ENCODE measurements at regions of chr7 and their contacts with region 1.

Region 1: GRCh38 chr7:18547509-18548187 is 52.1 kb downstream of the HDAC9 start:
- DNase-seq: no peak
- ATAC-seq: no peak
- H3K4me3 ChIP-seq: no peak overlapping the region
- H3K27ac ChIP-seq: peak overlapping the region; percentile 84
- H3K4me1 ChIP-seq: peaks cover 46% of the 10 kb centered on the region
- H3K27me3 ChIP-seq: no peaks in the 10 kb centered on the region
- CTCF ChIP-seq: no peak

Region 2: GRCh38 chr7:18408461-18408860 is 139.2 kb before region 1 on chr7:
- CTCF ChIA-PET with region 1: no interaction called
- POLR2A ChIA-PET with region 1: interaction called, 4 read pairs
- intact Hi-C with region 1: loop called (anchors 1 kb)
- DNase-seq: peak; percentile 86
- ATAC-seq: peak; percentile 98
- H3K4me3 ChIP-seq: no peak overlapping the region
- H3K27ac ChIP-seq: peak overlapping the region; percentile 49
- H3K4me1 ChIP-seq: peaks cover 27% of the 10 kb centered on the region
- H3K27me3 ChIP-seq: no peaks in the 10 kb centered on the region
- CTCF ChIP-seq: no peak

Region 3: GRCh38 chr7:18489624-18490023 is 58.0 kb before region 1 on chr7:
- CTCF ChIA-PET with region 1: no interaction called
- POLR2A ChIA-PET with region 1: no interaction called
- intact Hi-C with region 1: loop called (anchors 5 kb)
- DNase-seq: no peak
- ATAC-seq: no peak
- H3K4me3 ChIP-seq: no peak overlapping the region
- H3K27ac ChIP-seq: no peak overlapping the region
- H3K4me1 ChIP-seq: peaks cover 10% of the 10 kb centered on the region; the same call in 1 of the 2 replicates
- H3K27me3 ChIP-seq: no peaks in the 10 kb centered on the region
- CTCF ChIP-seq: no peak

Region 4: DNA sequence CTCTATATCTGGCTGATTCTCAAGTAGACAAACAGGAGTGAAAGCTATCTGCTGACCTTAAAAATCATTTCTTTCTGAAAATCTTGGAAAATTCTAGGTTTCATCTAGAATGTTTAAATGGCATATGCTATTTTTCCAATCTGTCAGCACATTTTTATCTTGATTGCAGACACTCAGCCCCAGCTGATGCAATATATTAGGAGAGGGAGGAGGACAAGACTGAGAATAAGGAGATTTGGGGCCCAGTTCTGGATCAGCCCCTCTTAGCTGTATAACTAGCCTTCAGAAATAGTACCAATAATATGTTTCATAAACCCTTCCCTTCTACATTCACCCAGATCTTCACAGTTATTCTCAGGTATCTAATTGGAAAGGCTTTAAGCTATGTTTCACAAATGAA is 79.1 kb after region 1 on chr7:
- CTCF ChIA-PET with region 1: no interaction called
- POLR2A ChIA-PET with region 1: no interaction called
- intact Hi-C with region 1: no loop called
- DNase-seq: no peak
- ATAC-seq: no peak
- H3K4me3 ChIP-seq: no peak overlapping the region
- H3K27ac ChIP-seq: no peak overlapping the region
- H3K4me1 ChIP-seq: no peaks in the 10 kb centered on the region
- H3K27me3 ChIP-seq: no peaks in the 10 kb centered on the region
- CTCF ChIP-seq: no peak

Measured in PC-3 (cell line).